ENCODE measurements at regions of chr10 and their contacts with region 1.

Region 1: DNA sequence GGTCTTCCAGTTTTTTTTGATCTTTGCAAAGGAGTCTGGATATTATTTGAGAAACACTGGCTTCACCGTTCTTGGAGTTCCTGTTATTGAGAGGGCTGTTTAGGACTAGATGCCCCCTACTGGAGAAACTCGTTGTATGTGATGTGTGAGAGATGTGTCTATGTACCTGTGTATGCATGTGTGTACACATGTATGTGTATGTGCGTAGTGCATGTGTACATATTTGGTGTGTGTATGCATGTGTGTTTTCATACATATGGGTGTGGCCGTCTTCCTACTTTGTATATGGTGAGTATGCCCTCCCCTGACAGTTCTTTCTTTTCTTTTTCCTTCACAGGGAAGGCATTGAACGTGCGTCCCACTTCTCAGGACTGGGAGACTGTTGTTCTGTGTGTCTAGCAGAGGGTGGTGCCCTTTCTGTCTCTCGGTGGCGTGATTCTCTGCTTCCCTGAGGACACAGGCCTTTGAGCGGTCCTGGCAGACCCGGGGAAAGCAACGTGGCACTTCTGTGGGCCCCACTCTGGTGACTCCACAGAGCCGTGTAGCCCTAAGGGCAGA is 3.0 kb upstream of the CALHM3 start:
- DNase-seq: peak; percentile 72
- H3K4me3 ChIP-seq: no peak overlapping the region
- H3K27ac ChIP-seq: no peak overlapping the region
- H3K4me1 ChIP-seq: no peaks in the 10 kb centered on the region
- H3K27me3 ChIP-seq: no peaks in the 10 kb centered on the region
- CTCF ChIP-seq: peak; percentile 49 to 69
- POLR2A ChIP-seq: no peak

Region 2: GRCh38 chr10:103416436-103417147 is 65.5 kb before region 1 on chr10:
- CTCF ChIA-PET with region 1: interaction called, 45 read pairs
- POLR2A ChIA-PET with region 1: interaction called, 5 read pairs
- dilution Hi-C with region 1: no loop called
- intact Hi-C with region 1: loop called (anchors 1 kb)
- DNase-seq: peak; percentile 70
- H3K4me3 ChIP-seq: no peak overlapping the region
- H3K27ac ChIP-seq: no peak overlapping the region
- H3K4me1 ChIP-seq: no peaks in the 10 kb centered on the region
- H3K27me3 ChIP-seq: no peaks in the 10 kb centered on the region
- CTCF ChIP-seq: peak; percentile 36 to 40
- POLR2A ChIP-seq: no peak

Region 3: DNA sequence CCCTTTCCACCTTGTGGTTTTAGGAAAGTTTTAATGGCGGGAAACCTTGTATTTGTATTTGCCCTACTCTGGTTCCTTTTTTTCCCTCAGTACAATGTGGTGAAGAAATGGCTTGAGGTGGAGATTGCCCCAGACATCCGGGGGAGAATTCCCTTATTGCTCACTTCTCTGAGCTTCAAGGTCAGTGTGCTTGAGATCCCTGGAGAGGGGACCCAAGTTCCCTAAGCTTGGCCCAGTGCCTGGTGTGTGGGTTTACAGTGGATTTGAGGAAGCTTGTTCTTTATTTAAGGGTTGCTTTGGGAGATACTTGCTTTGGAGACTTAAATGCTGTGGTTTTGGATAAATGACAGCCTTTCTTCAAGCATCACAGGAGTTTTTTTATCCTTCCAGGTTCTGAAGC is 48.2 kb before region 1 on chr10:
- CTCF ChIA-PET with region 1: no interaction called
- POLR2A ChIA-PET with region 1: no interaction called
- dilution Hi-C with region 1: no loop called
- intact Hi-C with region 1: loop called (anchors 5 kb)
- DNase-seq: no peak
- H3K4me3 ChIP-seq: no peak overlapping the region
- H3K27ac ChIP-seq: no peak overlapping the region
- H3K4me1 ChIP-seq: peaks cover 5% of the 10 kb centered on the region
- H3K27me3 ChIP-seq: no peaks in the 10 kb centered on the region
- CTCF ChIP-seq: no peak
- POLR2A ChIP-seq: no peak

Region 4: GRCh38 chr10:103445767-103446567 is 36.1 kb before region 1 on chr10:
- CTCF ChIA-PET with region 1: interaction called, 15 read pairs
- POLR2A ChIA-PET with region 1: no interaction called
- dilution Hi-C with region 1: no loop called
- intact Hi-C with region 1: loop called (anchors 2 kb)
- DNase-seq: peak; percentile 76
- H3K4me3 ChIP-seq: no peak overlapping the region
- H3K27ac ChIP-seq: peak overlapping the region; percentile 79
- H3K4me1 ChIP-seq: peaks cover 51% of the 10 kb centered on the region
- H3K27me3 ChIP-seq: no peaks in the 10 kb centered on the region
- CTCF ChIP-seq: no peak
- POLR2A ChIP-seq: peak; percentile 50

Region 5: GRCh38 chr10:103451831-103452505 is 30.1 kb before region 1 on chr10 and contains the start of gene CALHM2:
- CTCF ChIA-PET with region 1: interaction called, 13 read pairs
- POLR2A ChIA-PET with region 1: no interaction called
- dilution Hi-C with region 1: no loop called
- intact Hi-C with region 1: loop called (anchors 2 kb)
- DNase-seq: peak; percentile 57
- H3K4me3 ChIP-seq: peak within 1 kb of the TSS; percentile 8 to 66 (median 55)
- H3K27ac ChIP-seq: peak within 1 kb of the TSS; percentile 57
- H3K4me1 ChIP-seq: peaks cover 38% of the 10 kb centered on the region
- H3K27me3 ChIP-seq: no peaks in the 10 kb centered on the region
- CTCF ChIP-seq: no peak
- POLR2A ChIP-seq: no peak
- total RNA-seq, gene CALHM2: 28.4 and 32.1 TPM in 2 replicates

Measured in endothelial cell of umbilical vein (primary cell).